ENCODE measurements at regions of chr6 and their contacts with region 1.

Region 1: GRCh38 chr6:122869437-122870024 is 80.5 kb downstream of the SMPDL3A start:
- DNase-seq: no peak

Region 2: GRCh38 chr6:122825158-122825557 is 44.4 kb before region 1 on chr6:
- intact Hi-C with region 1: loop called in 1 of 2 experiments (anchors 1 kb)
- DNase-seq: no peak

Region 3: GRCh38 chr6:123541462-123541861 is 671.9 kb after region 1 on chr6:
- intact Hi-C with region 1: loop called in 1 of 2 experiments (anchors 5 kb)
- DNase-seq: no peak